Activated naive CD4-positive, alpha-beta T cell treated with anti-CD3 and anti-CD28 coated beads for 36 hours (primary cell): ENCODE measurements at regions of chr4 and their contacts with region 1.

Region 1: DNA sequence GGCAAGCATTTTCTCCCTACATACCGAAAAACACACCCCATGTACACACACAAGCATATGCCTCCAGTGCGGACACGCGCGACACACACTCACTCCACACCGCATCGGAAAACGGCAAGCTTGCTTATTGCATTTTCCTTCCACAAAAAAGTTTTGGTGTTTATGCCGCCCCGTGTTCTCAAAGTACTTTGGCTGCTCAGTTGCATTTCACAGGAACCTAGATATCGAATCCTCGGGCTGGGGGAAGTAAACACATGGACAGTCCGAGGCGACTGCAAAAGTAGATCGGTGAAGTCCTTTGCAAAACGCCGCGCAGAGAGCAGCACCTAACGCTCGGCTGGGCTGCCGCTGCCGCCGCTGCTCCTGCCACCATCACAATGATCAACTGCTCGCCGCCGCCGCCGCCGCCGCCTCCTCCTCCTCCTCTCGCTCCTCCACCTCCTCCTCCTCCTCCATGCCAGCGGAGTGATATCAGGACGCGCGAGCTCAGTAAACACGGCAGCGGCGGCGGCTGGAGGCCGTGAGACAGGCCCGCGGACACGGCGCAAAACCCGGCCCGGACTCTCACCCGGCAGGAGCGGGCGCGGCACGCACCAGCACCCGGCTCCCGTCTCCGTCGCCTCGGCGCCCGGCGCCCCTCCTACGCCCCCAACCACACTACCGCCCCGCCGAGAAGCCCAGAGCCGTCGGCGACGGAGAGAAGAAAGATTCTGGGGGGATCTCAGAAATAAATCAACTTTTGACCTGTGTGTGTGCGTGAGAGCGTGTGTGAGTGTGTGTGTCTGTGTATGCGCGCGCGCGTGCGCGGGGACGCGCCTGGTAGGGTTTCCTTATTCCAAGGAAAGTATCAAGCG is at the start of gene MAML3:
- DNase-seq: peak; percentile 85
- H3K4me3 Mint-ChIP-seq: peak within 1 kb of the TSS; percentile 82
- H3K27ac Mint-ChIP-seq: peak within 1 kb of the TSS; percentile 5
- H3K4me1 Mint-ChIP-seq: peaks cover 35% of the 10 kb centered on the region
- H3K27me3 Mint-ChIP-seq: peaks cover 13% of the 10 kb centered on the region
- total RNA-seq, gene MAML3: 0.52 to 0.76 TPM

Region 2: GRCh38 chr4:139015269-139015947 is 1138.5 kb before region 1 on chr4 and contains the start of gene NOCT:
- CTCF ChIA-PET with region 1: no interaction called
- intact Hi-C with region 1: loop called (anchors 2 kb)
- DNase-seq: peak; percentile 97
- H3K4me3 Mint-ChIP-seq: peak within 1 kb of the TSS; percentile 91
- H3K27ac Mint-ChIP-seq: peak within 1 kb of the TSS; percentile 96
- H3K4me1 Mint-ChIP-seq: peaks cover 48% of the 10 kb centered on the region
- H3K27me3 Mint-ChIP-seq: no peaks in the 10 kb centered on the region
- total RNA-seq, gene NOCT: 9.3 to 10.4 TPM

Region 3: GRCh38 chr4:139554893-139555704 is 598.8 kb before region 1 on chr4:
- CTCF ChIA-PET with region 1: no interaction called
- intact Hi-C with region 1: loop called (anchors 2 kb)
- DNase-seq: peak; percentile 92
- H3K4me3 Mint-ChIP-seq: peak overlapping the region; percentile 94
- H3K27ac Mint-ChIP-seq: peak overlapping the region; percentile 90
- H3K4me1 Mint-ChIP-seq: peaks cover 41% of the 10 kb centered on the region
- H3K27me3 Mint-ChIP-seq: no peaks in the 10 kb centered on the region

Region 4: DNA sequence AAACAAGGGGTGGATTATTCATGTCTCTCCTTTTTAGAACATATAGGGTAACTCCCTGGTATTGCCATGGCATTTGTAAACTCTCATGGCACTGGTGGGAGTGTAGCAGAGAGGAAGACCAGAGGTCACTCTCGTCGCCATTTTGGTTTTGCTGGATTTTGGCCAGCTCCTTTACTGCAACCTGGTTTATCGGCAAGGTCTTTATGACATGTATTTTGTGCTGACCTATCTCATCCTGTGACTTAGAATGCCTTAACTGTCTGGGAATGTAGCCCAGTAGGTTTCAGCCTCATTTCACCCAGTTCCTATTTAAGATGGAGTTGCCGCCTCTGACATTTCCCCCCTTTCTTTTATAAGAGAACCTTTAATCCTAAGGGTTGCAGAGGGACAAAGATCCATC is 442.5 kb before region 1 on chr4:
- CTCF ChIA-PET with region 1: no interaction called
- intact Hi-C with region 1: no loop called
- DNase-seq: no peak
- H3K4me3 Mint-ChIP-seq: no peak overlapping the region
- H3K27ac Mint-ChIP-seq: no peak overlapping the region
- H3K4me1 Mint-ChIP-seq: no peaks in the 10 kb centered on the region
- H3K27me3 Mint-ChIP-seq: no peaks in the 10 kb centered on the region

Region 5: GRCh38 chr4:139950568-139950967 is 203.4 kb before region 1 on chr4:
- CTCF ChIA-PET with region 1: no interaction called
- intact Hi-C with region 1: loop called (anchors 2 kb)
- DNase-seq: peak; percentile 60
- H3K4me3 Mint-ChIP-seq: no peak overlapping the region
- H3K27ac Mint-ChIP-seq: peak overlapping the region; percentile 48
- H3K4me1 Mint-ChIP-seq: peaks cover 25% of the 10 kb centered on the region
- H3K27me3 Mint-ChIP-seq: no peaks in the 10 kb centered on the region

Region 6: DNA sequence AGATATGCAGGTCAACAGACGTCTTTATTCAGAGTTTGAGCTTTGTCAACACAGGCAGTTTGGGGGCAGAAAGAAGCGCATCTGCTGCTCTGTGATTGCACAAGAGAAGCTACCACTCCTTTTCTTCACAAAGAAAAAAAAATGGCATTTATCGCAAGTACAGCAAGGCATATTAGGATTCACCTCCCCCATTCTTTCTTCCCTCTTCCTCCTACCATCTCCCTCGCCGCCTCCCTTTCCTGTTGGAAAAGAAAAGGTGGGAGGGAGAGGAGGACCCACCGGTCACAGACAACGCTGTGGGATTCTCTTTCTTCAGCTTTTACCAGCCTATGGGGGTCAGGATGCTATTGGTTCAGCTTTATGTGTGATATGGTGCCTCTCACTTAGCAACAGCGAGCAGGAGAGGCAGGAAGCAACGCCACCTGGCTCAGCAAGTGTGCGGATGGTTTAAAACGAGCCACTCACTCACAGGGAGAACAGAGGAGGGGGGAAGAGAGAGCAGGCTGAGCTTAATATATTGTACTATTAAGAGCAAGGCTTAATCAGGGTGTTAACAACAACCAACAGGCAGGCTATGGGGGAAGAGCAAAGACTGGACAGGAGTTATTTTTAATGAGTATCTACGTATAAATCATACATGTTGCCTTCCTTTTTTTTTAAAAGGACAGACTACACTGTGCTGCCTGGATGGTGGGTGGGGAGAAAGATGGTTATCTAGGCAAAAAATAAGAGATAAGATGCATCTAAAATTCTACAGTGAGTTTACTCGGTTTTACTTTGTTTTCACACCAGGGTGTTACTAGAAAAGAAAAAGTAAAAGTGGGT is 104.7 kb before region 1 on chr4:
- CTCF ChIA-PET with region 1: interaction called, 4 read pairs
- intact Hi-C with region 1: loop called (anchors 1 kb)
- DNase-seq: peak; percentile 78
- H3K4me3 Mint-ChIP-seq: peak overlapping the region; percentile 78
- H3K27ac Mint-ChIP-seq: peak overlapping the region; percentile 14
- H3K4me1 Mint-ChIP-seq: peaks cover 31% of the 10 kb centered on the region
- H3K27me3 Mint-ChIP-seq: peaks cover 2% of the 10 kb centered on the region

Region 7: GRCh38 chr4:140088323-140088967 is 65.5 kb before region 1 on chr4:
- CTCF ChIA-PET with region 1: no interaction called
- intact Hi-C with region 1: no loop called
- DNase-seq: no peak
- H3K4me3 Mint-ChIP-seq: no peak overlapping the region
- H3K27ac Mint-ChIP-seq: no peak overlapping the region
- H3K4me1 Mint-ChIP-seq: peaks cover 12% of the 10 kb centered on the region
- H3K27me3 Mint-ChIP-seq: no peaks in the 10 kb centered on the region

Region 8: DNA sequence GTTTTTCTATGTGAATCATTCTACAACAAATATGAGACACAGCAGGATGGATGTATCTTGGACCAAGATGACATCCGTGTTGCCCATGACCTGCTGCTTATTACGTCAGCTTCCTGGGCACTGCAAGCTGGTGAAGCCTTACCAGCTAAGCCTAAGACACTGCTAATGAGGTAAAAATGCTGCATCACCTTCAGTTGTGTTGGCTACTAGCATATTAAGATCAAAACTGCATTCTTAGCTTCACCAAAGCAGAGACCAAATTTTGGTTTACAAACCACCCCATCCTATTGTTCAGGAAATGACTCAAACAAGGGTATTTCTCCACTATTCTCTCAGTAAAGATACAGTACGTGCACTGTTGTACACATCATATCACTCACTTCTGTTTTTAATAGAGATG is 50.3 kb before region 1 on chr4:
- CTCF ChIA-PET with region 1: interaction called, 3 read pairs
- intact Hi-C with region 1: loop called (anchors 1 kb)
- DNase-seq: peak; percentile 64
- H3K4me3 Mint-ChIP-seq: no peak overlapping the region
- H3K27ac Mint-ChIP-seq: no peak overlapping the region
- H3K4me1 Mint-ChIP-seq: peaks cover 48% of the 10 kb centered on the region
- H3K27me3 Mint-ChIP-seq: peaks cover 2% of the 10 kb centered on the region

Region 9: GRCh38 chr4:140373328-140374129 is 219.6 kb after region 1 on chr4 and contains the start of gene SCOC:
- CTCF ChIA-PET with region 1: no interaction called
- intact Hi-C with region 1: loop called (anchors 2 kb)
- DNase-seq: peak; percentile 99
- H3K4me3 Mint-ChIP-seq: no peak within 1 kb of the TSS
- H3K27ac Mint-ChIP-seq: peak within 1 kb of the TSS; percentile 69
- H3K4me1 Mint-ChIP-seq: peaks cover 33% of the 10 kb centered on the region
- H3K27me3 Mint-ChIP-seq: no peaks in the 10 kb centered on the region
- total RNA-seq, gene SCOC: 44.7 to 49.4 TPM